ENCODE measurements at regions of chr3 and their contacts with region 1.

Region 1: GRCh38 chr3:188954590-188955208 is 217.1 kb upstream of the TPRG1 start:
- DNase-seq: peak; percentile 88
- ATAC-seq: peak; percentile 49
- H3K4me3 ChIP-seq: no peak overlapping the region
- H3K27ac ChIP-seq: no peak overlapping the region
- H3K4me1 ChIP-seq: peaks cover 10% of the 10 kb centered on the region
- H3K27me3 ChIP-seq: no peaks in the 10 kb centered on the region
- CTCF ChIP-seq: peak; percentile 97
- POLR2A ChIP-seq: peak; percentile 59; the same call in 1 of the 2 replicates
- RAD21 ChIP-seq: peak; percentile 100

Region 2: DNA sequence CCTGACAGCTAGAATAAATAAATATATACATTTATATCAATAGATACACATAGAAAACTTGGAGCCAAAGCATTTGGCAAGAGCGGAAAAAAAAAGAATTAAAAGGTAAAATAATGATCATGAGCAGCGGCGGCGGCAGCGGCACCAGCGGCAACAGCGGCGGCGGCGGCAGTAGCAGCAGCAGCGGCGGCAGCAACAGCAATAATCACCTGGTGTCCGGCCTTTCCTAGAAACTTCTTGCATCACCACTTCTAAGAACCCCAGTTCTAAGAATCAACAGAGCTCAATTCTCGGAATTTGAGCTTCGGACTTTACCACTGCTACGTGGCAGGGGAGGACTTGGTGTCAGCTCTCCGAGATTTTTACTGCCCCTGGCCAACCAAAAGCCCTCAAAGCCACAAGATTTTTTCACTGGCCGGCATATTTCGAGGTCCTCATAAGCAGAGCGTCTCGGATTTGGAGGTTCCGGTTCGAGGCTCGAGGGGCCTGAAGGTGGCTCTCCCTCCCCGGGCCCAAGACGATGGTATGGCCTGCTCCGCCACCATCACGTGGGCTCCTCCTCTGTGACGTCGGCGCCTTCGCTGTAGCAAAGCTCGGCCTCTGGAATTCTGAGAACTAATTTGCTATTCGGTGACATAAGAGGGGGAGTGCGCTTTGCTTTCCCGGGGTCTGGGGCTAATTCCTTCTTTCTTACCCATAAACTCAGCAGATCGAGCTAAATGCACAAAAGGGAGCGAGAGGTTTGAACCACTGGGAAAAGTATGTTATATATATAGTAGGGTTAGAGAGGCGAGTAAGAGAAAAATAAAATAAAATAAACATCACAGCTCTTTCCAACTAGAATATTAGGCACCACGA is 1209.3 kb before region 1 on chr3 and contains the start of gene BCL6:
- CTCF ChIA-PET with region 1: interaction called, 96 read pairs
- POLR2A ChIA-PET with region 1: no interaction called
- dilution Hi-C with region 1: loop called (anchors 10 kb)
- in situ Hi-C with region 1: loop called (anchors 5 kb)
- intact Hi-C with region 1: loop called (anchors 1 kb)
- DNase-seq: peak; percentile 99
- ATAC-seq: peak; percentile 65
- H3K4me3 ChIP-seq: peak within 1 kb of the TSS; percentile 83
- H3K27ac ChIP-seq: peak within 1 kb of the TSS; percentile 97
- H3K4me1 ChIP-seq: peaks cover 7% of the 10 kb centered on the region
- H3K27me3 ChIP-seq: no peaks in the 10 kb centered on the region
- CTCF ChIP-seq: no peak
- POLR2A ChIP-seq: peak; percentile 96
- RAD21 ChIP-seq: peak; percentile 27; the same call in 1 of the 2 replicates
- total RNA-seq, gene BCL6: 21.4 and 22.6 TPM in 2 replicates

Region 3: GRCh38 chr3:188164248-188164687 is 790.4 kb before region 1 on chr3:
- CTCF ChIA-PET with region 1: no interaction called
- POLR2A ChIA-PET with region 1: no interaction called
- dilution Hi-C with region 1: no loop called
- in situ Hi-C with region 1: loop called (anchors 10 kb)
- intact Hi-C with region 1: no loop called
- DNase-seq: no peak
- ATAC-seq: no peak
- H3K4me3 ChIP-seq: no peak overlapping the region
- H3K27ac ChIP-seq: no peak overlapping the region
- H3K4me1 ChIP-seq: peaks cover 8% of the 10 kb centered on the region
- H3K27me3 ChIP-seq: no peaks in the 10 kb centered on the region
- CTCF ChIP-seq: no peak
- POLR2A ChIP-seq: no peak
- RAD21 ChIP-seq: no peak

Region 4: DNA sequence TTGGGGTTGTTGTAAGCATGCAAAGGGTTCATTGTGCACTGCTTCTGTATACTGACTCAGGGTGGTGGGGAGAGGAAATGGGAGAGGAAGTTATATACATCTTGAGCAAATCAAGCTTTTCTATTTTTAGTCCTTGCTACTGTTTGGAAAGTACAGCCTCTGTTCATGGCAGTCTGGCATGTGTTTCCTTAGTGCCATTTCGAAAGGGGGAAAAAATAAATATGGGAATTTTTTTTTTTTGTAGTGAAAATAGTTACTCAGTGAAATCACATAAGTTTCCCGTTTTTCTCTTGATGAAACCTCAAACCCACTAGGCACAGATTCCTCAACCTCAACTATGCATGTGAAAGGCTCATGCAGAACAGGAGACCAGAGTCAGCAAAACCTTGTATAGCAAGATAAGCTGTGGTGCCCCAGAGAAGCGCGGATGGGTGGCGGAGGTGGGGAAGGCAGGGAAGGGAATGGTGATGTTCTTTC is 447.4 kb before region 1 on chr3:
- CTCF ChIA-PET with region 1: interaction called, 3 read pairs
- POLR2A ChIA-PET with region 1: no interaction called
- dilution Hi-C with region 1: no loop called
- in situ Hi-C with region 1: loop called (anchors 10 kb)
- intact Hi-C with region 1: loop called (anchors 5 kb)
- DNase-seq: peak; percentile 97
- ATAC-seq: peak; percentile 82
- H3K4me3 ChIP-seq: no peak overlapping the region
- H3K27ac ChIP-seq: peak overlapping the region; percentile 23; the same call in 1 of the 2 replicates
- H3K4me1 ChIP-seq: peaks cover 11% of the 10 kb centered on the region
- H3K27me3 ChIP-seq: no peaks in the 10 kb centered on the region
- CTCF ChIP-seq: no peak
- POLR2A ChIP-seq: no peak
- RAD21 ChIP-seq: no peak; the same call in 1 of the 2 replicates

Region 5: DNA sequence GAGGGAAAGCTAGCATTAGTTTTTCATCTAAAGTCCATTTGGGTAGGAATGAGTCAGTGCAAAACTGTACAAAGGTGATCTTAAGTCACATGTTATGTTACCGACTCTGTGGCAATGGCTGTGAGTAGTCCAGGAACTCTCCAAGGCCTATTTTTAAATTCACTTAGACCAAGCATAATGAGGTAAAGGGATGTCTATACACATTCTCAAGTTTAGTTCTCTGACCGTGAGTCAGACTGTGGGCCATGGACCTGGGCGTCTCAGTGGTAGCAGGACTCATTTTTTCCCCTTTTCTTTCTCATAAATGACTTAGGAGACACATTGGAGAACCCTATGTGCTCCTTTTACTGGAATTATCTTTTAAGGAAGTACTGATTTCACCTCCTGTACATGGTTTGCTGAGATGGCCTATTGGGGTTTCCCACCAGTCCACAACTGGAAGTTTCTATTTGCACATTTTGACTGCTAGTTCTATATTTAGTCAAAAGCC is 271.6 kb before region 1 on chr3:
- CTCF ChIA-PET with region 1: no interaction called
- POLR2A ChIA-PET with region 1: no interaction called
- dilution Hi-C with region 1: no loop called
- in situ Hi-C with region 1: no loop called
- intact Hi-C with region 1: loop called (anchors 10 kb)
- DNase-seq: peak; percentile 99
- ATAC-seq: peak; percentile 91
- H3K4me3 ChIP-seq: no peak overlapping the region
- H3K27ac ChIP-seq: no peak overlapping the region
- H3K4me1 ChIP-seq: peaks cover 16% of the 10 kb centered on the region
- H3K27me3 ChIP-seq: no peaks in the 10 kb centered on the region
- CTCF ChIP-seq: no peak
- POLR2A ChIP-seq: no peak
- RAD21 ChIP-seq: no peak

Region 6: DNA sequence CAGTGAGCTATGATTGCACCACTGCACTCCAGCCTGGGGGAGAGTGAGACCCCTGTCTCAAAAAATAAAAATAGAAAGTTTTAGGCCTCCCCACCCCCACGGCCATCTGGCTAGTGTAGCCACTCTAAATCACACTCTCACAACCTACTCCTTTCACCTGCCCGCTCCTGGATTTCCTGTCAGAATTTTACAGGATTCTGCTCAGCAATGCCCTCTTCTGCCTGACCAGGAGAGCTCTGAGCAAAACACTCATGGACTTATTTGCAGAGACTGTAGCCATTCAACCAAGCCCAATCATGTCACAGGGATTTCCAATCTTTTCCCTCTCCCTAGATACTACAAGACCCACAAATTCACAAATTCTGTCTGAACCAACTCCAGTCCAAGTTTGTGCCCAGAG is 25.6 kb before region 1 on chr3:
- CTCF ChIA-PET with region 1: interaction called, 3 read pairs
- POLR2A ChIA-PET with region 1: interaction called, 13 read pairs
- dilution Hi-C with region 1: no loop called
- in situ Hi-C with region 1: no loop called
- intact Hi-C with region 1: no loop called
- DNase-seq: no peak
- ATAC-seq: peak; percentile 56; the same call in 1 of the 2 replicates
- H3K4me3 ChIP-seq: no peak overlapping the region
- H3K27ac ChIP-seq: no peak overlapping the region
- H3K4me1 ChIP-seq: peaks cover 3% of the 10 kb centered on the region; the same call in 1 of the 2 replicates
- H3K27me3 ChIP-seq: no peaks in the 10 kb centered on the region
- CTCF ChIP-seq: no peak
- POLR2A ChIP-seq: no peak
- RAD21 ChIP-seq: peak; percentile 20; the same call in 1 of the 2 replicates

Measured in IMR-90 (cell line).